ENCODE measurements at regions of chr15 and their contacts with region 1.

Region 1: GRCh38 chr15:89057504-89058133 is 30.6 kb upstream of the ABHD2 start:
- DNase-seq: peak; percentile 56
- H3K4me3 ChIP-seq: no peak overlapping the region
- H3K27ac ChIP-seq: no peak overlapping the region
- H3K4me1 ChIP-seq: no peaks in the 10 kb centered on the region
- H3K27me3 ChIP-seq: no peaks in the 10 kb centered on the region
- CTCF ChIP-seq: peak; percentile 97 to 99

Region 2: DNA sequence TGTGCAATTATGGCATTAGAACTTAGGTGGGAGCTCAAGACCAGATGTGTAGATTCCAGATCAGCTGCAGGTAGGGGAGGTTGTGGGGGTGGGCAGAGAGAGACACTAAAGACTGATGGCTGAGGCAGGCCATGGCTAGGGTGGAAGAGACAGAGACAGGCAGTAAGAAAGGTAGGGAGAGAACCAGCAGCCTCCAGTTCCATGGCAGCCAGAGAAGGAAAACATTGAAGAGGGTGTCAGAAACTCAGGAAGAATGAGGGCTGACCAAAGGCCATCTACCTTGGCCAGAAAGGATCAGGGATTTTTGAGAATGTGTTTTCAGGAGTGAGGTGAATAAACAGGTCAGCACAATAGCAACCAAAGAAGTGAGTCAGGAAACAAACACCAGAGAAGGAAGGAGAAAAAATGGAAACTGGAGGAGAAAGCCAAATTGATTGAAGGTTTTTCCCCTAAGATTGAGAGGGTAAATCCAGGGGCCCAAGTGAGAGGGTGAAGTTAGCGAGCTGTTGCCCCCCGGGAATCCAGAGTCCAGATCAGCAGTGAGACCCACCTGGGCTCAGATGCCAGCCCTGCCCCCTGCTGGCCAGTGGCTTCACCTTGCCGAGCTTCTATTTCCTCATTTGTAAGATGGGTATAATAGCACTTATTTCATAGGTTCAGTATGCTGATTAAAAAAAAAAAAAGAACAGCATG is 71.7 kb after region 1 on chr15:
- CTCF ChIA-PET with region 1: interaction called, 12 read pairs
- dilution Hi-C with region 1: no loop called
- in situ Hi-C with region 1: no loop called
- intact Hi-C with region 1: loop called (anchors 1 kb)
- DNase-seq: peak; percentile 29
- H3K4me3 ChIP-seq: no peak overlapping the region
- H3K27ac ChIP-seq: peak overlapping the region; percentile 0
- H3K4me1 ChIP-seq: peaks cover 30% of the 10 kb centered on the region
- H3K27me3 ChIP-seq: no peaks in the 10 kb centered on the region
- CTCF ChIP-seq: peak; percentile 62 to 77

Region 3: GRCh38 chr15:89299896-89300295 is 242.3 kb after region 1 on chr15:
- CTCF ChIA-PET with region 1: no interaction called
- dilution Hi-C with region 1: no loop called
- in situ Hi-C with region 1: loop called in 1 of 2 experiments (anchors 25 kb)
- intact Hi-C with region 1: loop called (anchors 2 kb)
- DNase-seq: no peak
- H3K4me3 ChIP-seq: no peak overlapping the region
- H3K27ac ChIP-seq: no peak overlapping the region
- H3K4me1 ChIP-seq: no peaks in the 10 kb centered on the region
- H3K27me3 ChIP-seq: no peaks in the 10 kb centered on the region
- CTCF ChIP-seq: peak; percentile 9 to 35

Measured in mammary epithelial cell (primary cell).